Mammary epithelial cell (primary cell): ENCODE measurements at regions of chr11 and their contacts with region 1.

Region 1: GRCh38 chr11:67439321-67439883 is 1.9 kb upstream of the PTPRCAP start:
- DNase-seq: no peak
- H3K4me3 ChIP-seq: no peak overlapping the region
- H3K27ac ChIP-seq: no peak overlapping the region
- H3K4me1 ChIP-seq: peaks cover 9% of the 10 kb centered on the region
- H3K27me3 ChIP-seq: no peaks in the 10 kb centered on the region
- CTCF ChIP-seq: peak; percentile 27 to 49

Region 2: DNA sequence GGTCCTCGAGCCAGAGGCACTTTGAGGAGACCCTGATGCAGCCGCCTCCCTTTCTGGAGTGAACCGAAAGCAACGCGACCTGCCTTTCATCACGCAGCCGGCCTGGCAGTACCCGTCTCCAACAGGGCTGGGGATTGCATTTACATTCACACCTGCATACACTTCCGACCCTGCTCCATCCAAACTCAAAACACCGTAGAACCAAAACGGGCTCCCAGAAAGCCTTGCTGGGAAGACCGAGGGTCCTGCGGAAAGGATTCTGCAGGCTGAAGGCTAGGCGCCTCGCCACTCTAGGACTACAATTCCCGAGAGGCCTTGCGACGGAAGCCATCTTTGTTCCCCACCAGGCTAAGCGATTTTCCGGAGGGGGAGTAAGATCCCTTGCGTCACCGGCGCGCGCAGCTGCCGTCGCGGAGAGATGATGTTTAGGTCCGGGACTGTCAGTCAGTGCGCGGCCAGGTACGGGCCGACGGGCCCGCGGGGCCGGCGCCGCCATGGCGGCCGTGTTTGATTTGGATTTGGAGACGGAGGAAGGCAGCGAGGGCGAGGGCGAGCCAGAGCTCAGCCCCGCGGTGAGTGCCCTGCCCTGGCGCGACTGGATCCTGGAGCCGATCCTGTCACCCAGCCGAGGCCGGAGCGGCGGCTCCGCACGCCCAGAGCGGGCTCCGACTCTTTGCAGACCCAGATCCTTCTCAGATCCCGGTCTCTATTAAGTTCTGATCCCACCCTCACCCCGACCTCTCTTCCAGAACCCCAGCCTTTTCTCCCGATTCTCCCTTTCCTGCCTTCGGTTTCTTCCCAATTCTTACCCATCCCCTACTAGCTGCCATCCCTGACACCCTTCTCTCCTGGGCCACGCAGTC is 11.1 kb before region 1 on chr11 and contains the start of gene RPS6KB2:
- CTCF ChIA-PET with region 1: no interaction called
- dilution Hi-C with region 1: no loop called
- in situ Hi-C with region 1: no loop called
- intact Hi-C with region 1: no loop called
- DNase-seq: peak; percentile 95
- H3K4me3 ChIP-seq: peak within 1 kb of the TSS; percentile 62 to 72 (median 71)
- H3K27ac ChIP-seq: peak within 1 kb of the TSS; percentile 58
- H3K4me1 ChIP-seq: peaks cover 12% of the 10 kb centered on the region
- H3K27me3 ChIP-seq: no peaks in the 10 kb centered on the region
- CTCF ChIP-seq: no peak
- total RNA-seq, gene RPS6KB2: 35.7 to 62.3 TPM

Region 3: GRCh38 chr11:67468835-67469811 is 29.7 kb after region 1 on chr11 and contains the start of gene TMEM134:
- CTCF ChIA-PET with region 1: no interaction called
- dilution Hi-C with region 1: no loop called
- in situ Hi-C with region 1: no loop called
- intact Hi-C with region 1: loop called (anchors 1 kb)
- DNase-seq: peak; percentile 80
- H3K4me3 ChIP-seq: peak within 1 kb of the TSS; percentile 86 to 95 (median 92)
- H3K27ac ChIP-seq: peak within 1 kb of the TSS; percentile 71
- H3K4me1 ChIP-seq: peaks cover 20% of the 10 kb centered on the region
- H3K27me3 ChIP-seq: no peaks in the 10 kb centered on the region
- CTCF ChIP-seq: peak; percentile 24 to 53
- total RNA-seq, gene TMEM134: 55.3 to 69.4 TPM

Region 4: DNA sequence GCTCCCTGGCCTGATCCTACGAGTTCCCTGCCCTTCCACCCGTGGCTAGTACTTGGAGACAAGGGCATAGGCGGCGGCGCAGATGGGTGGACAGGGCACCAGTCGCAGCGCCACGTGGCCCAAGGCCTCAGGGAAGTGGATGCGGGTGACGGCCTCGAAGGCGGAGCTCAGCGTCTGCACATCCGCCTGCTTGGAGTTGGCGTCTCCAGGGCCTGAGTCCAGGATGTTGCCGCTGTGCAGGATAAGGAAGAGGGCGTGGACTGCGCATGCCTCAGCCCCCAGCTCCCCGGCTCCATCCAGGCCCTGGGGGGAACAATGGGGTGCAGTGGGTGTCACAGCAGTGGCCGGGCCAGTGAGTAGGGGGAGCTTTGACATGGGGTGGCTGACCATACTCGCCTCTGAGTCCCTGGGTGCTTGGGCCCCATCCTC is 59.2 kb after region 1 on chr11:
- CTCF ChIA-PET with region 1: interaction called, 10 read pairs
- dilution Hi-C with region 1: no loop called
- in situ Hi-C with region 1: no loop called
- intact Hi-C with region 1: no loop called
- DNase-seq: no peak
- H3K4me3 ChIP-seq: no peak overlapping the region
- H3K27ac ChIP-seq: no peak overlapping the region
- H3K4me1 ChIP-seq: peaks cover 5% of the 10 kb centered on the region
- H3K27me3 ChIP-seq: no peaks in the 10 kb centered on the region
- CTCF ChIP-seq: no peak

Region 5: GRCh38 chr11:67544616-67545242 is 105.3 kb after region 1 on chr11:
- CTCF ChIA-PET with region 1: no interaction called
- dilution Hi-C with region 1: loop called (anchors 5 kb)
- in situ Hi-C with region 1: no loop called
- intact Hi-C with region 1: no loop called
- DNase-seq: no peak
- H3K4me3 ChIP-seq: no peak overlapping the region
- H3K27ac ChIP-seq: no peak overlapping the region
- H3K4me1 ChIP-seq: no peaks in the 10 kb centered on the region
- H3K27me3 ChIP-seq: no peaks in the 10 kb centered on the region
- CTCF ChIP-seq: no peak